Calu3 (cell line): ENCODE measurements at regions of chr12 and their contacts with region 1.

Region 1: DNA sequence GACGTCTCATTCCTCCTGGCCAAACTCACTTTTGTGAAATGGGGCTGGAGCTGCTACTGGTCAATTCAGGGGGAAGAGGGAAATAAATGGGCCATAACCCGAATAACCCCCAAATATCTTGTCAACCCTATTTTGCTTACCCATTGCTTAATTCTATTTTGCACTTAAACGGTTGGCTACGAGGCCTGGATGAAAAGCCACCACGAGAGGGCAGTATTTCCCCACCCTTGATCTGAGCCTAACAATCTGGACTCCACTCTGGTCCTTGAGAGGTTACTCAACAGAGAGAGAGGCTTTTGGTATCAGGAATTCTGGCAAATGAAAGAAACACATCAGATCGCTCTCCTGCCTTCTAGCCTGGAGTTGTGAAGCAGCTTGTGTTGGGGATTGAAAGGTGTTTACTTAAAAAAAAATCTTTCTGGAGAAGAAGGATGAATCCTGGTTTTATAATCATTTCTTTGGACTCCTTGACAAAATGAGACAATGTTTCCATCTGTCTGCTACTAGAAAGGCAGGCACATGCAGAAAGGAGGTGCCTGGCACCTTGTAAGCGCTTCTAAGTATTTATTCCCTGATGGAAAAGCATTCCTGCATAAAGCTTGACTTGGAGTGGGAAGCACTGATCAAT is 22.4 kb upstream of the FBXO21 start:
- DNase-seq: peak; percentile 79
- H3K4me3 Mint-ChIP-seq: no peak overlapping the region
- H3K27ac Mint-ChIP-seq: no peak overlapping the region
- H3K4me1 Mint-ChIP-seq: no peaks in the 10 kb centered on the region
- H3K27me3 Mint-ChIP-seq: peaks cover 100% of the 10 kb centered on the region
- CTCF ChIP-seq: peak; percentile 76

Region 2: GRCh38 chr12:117069926-117070900 is 142.5 kb before region 1 on chr12:
- CTCF ChIA-PET with region 1: no interaction called
- intact Hi-C with region 1: no loop called
- DNase-seq: no peak
- H3K4me3 Mint-ChIP-seq: no peak overlapping the region
- H3K27ac Mint-ChIP-seq: no peak overlapping the region
- H3K4me1 Mint-ChIP-seq: peaks cover 18% of the 10 kb centered on the region
- H3K27me3 Mint-ChIP-seq: no peaks in the 10 kb centered on the region
- CTCF ChIP-seq: no peak

Region 3: GRCh38 chr12:117587631-117588287 is 375.1 kb after region 1 on chr12:
- CTCF ChIA-PET with region 1: no interaction called
- intact Hi-C with region 1: loop called (anchors 5 kb)
- DNase-seq: peak; percentile 77
- H3K4me3 Mint-ChIP-seq: no peak overlapping the region
- H3K27ac Mint-ChIP-seq: no peak overlapping the region
- H3K4me1 Mint-ChIP-seq: no peaks in the 10 kb centered on the region
- H3K27me3 Mint-ChIP-seq: peaks cover 56% of the 10 kb centered on the region
- CTCF ChIP-seq: peak; percentile 90

Region 4: GRCh38 chr12:117671734-117672133 is 459.1 kb after region 1 on chr12:
- CTCF ChIA-PET with region 1: no interaction called
- intact Hi-C with region 1: loop called (anchors 2 kb)
- DNase-seq: peak; percentile 72
- H3K4me3 Mint-ChIP-seq: no peak overlapping the region
- H3K27ac Mint-ChIP-seq: no peak overlapping the region
- H3K4me1 Mint-ChIP-seq: no peaks in the 10 kb centered on the region
- H3K27me3 Mint-ChIP-seq: peaks cover 88% of the 10 kb centered on the region
- CTCF ChIP-seq: peak; percentile 59

Region 5: DNA sequence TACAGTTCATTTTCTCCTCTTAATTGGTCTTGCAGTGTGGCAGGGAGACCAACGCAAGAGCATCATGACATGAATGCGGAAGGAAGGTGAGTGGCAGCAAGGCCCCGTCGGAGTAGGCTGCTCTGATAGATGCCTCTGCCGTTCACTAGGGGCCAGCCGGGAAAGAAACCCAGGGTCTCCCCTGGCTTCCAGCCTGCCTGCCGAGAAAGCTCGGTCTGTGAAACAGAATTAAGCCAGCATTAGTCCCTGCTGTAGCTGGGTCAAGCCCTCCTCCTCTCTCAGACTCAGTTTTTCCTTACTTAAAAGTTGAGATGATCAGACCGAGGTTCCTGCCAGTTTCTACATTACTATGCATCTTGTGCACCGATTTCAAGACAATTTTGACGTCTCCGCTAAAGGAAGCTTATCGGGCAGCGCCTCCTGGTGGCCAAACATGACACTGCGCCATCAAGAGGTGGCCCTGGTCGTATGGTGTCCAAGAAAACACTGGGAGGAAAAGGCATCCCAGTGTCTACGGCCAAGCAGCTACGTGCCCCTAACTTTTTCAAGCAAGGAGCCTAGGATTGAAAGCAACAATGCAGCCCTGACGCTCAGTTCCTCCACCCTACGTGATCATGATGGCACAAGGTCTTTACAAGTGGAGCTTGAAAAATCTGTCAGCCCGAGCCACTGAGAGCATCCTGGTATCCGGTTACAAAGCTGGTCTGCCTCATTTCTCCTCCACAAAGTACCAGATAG is 624.5 kb after region 1 on chr12:
- CTCF ChIA-PET with region 1: interaction called, 3 read pairs
- intact Hi-C with region 1: loop called (anchors 1 kb)
- DNase-seq: peak; percentile 84
- H3K4me3 Mint-ChIP-seq: no peak overlapping the region
- H3K27ac Mint-ChIP-seq: no peak overlapping the region
- H3K4me1 Mint-ChIP-seq: peaks cover 7% of the 10 kb centered on the region
- H3K27me3 Mint-ChIP-seq: peaks cover 42% of the 10 kb centered on the region
- CTCF ChIP-seq: peak; percentile 96

Region 6: DNA sequence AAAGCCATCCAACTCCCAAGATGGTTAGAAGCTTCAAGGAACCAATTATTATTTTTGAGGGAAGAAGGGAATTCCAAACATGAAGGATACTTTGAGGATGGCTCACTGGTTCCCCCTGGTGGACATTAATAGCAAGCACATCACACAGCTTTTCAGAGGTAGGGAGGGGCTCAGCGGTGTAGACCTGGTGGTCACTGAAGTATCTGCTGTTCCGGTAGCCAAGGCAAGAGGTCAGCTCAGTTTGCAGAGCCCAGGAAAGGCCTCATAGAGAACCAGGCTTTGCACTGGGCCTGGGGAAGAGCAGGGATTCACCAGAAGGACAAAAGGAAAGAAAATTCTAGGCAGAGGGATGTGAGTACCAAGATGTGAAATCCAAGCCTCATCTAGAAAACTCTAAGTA is 637.4 kb after region 1 on chr12:
- CTCF ChIA-PET with region 1: no interaction called
- intact Hi-C with region 1: loop called (anchors 1 kb)
- DNase-seq: peak; percentile 49
- H3K4me3 Mint-ChIP-seq: no peak overlapping the region
- H3K27ac Mint-ChIP-seq: no peak overlapping the region
- H3K4me1 Mint-ChIP-seq: peaks cover 25% of the 10 kb centered on the region
- H3K27me3 Mint-ChIP-seq: peaks cover 24% of the 10 kb centered on the region
- CTCF ChIP-seq: peak; percentile 81

Region 7: GRCh38 chr12:117857632-117858612 is 645.2 kb after region 1 on chr12:
- CTCF ChIA-PET with region 1: interaction called, 3 read pairs
- intact Hi-C with region 1: loop called (anchors 2 kb)
- DNase-seq: peak; percentile 77
- H3K4me3 Mint-ChIP-seq: no peak overlapping the region
- H3K27ac Mint-ChIP-seq: no peak overlapping the region
- H3K4me1 Mint-ChIP-seq: peaks cover 9% of the 10 kb centered on the region
- H3K27me3 Mint-ChIP-seq: peaks cover 2% of the 10 kb centered on the region
- CTCF ChIP-seq: peak; percentile 71